WTC11 (cell line): ENCODE measurements at regions of chr10 and their contacts with region 1.

Region 1: GRCh38 chr10:35195361-35196306 is 69.0 kb downstream of the CREM start:
- DNase-seq: no peak
- ATAC-seq: peak; percentile 93
- H3K4me3 Mint-ChIP-seq: peak overlapping the region; percentile 72
- H3K27ac Mint-ChIP-seq: peak overlapping the region; percentile 89
- H3K4me1 Mint-ChIP-seq: peaks cover 27% of the 10 kb centered on the region
- H3K27me3 Mint-ChIP-seq: no peaks in the 10 kb centered on the region
- CTCF ChIP-seq: peak; percentile 72

Region 2: GRCh38 chr10:35119378-35119777 is 76.3 kb before region 1 on chr10:
- CTCF ChIA-PET with region 1: interaction called, 25 read pairs
- POLR2A ChIA-PET with region 1: interaction called, 3 read pairs
- DNase-seq: no peak
- ATAC-seq: no peak
- H3K4me3 Mint-ChIP-seq: no peak overlapping the region
- H3K27ac Mint-ChIP-seq: no peak overlapping the region
- H3K4me1 Mint-ChIP-seq: no peaks in the 10 kb centered on the region
- H3K27me3 Mint-ChIP-seq: no peaks in the 10 kb centered on the region
- CTCF ChIP-seq: no peak

Region 3: GRCh38 chr10:35165136-35165535 is 30.5 kb before region 1 on chr10:
- CTCF ChIA-PET with region 1: interaction called, 15 read pairs
- POLR2A ChIA-PET with region 1: no interaction called
- DNase-seq: no peak
- ATAC-seq: 0 out of 2 replicates have a peak, but pooled peaks have one; percentile 26
- H3K4me3 Mint-ChIP-seq: no peak overlapping the region
- H3K27ac Mint-ChIP-seq: no peak overlapping the region
- H3K4me1 Mint-ChIP-seq: 0 out of 2 replicates have a peak, but pooled peaks cover 3% of the 10 kb centered on the region
- H3K27me3 Mint-ChIP-seq: no peaks in the 10 kb centered on the region
- CTCF ChIP-seq: no peak

Region 4: DNA sequence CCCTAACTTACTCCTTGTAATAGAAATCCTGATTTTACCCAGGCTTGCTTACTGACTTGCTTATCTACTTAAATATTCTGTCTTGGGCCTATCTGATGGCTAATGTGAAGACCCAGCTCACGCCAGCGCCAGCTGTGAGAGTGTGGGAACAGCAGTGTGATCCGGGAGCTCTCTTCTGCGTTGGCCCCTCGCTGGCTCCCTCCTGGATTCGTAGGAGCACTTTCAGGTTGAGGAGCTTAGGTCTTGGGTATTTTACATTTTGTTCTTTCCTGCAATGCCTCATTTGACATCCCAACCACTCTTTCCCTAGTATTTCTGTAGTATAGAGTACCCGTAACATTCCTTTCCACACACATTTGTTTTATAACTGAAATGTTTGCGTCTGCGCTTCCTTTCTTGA is 17.3 kb before region 1 on chr10:
- CTCF ChIA-PET with region 1: interaction called, 14 read pairs
- POLR2A ChIA-PET with region 1: no interaction called
- DNase-seq: no peak
- ATAC-seq: peak; percentile 48; the same call in 1 of the 2 replicates
- H3K4me3 Mint-ChIP-seq: no peak overlapping the region
- H3K27ac Mint-ChIP-seq: 0 out of 2 replicates have a peak overlapping the region, but pooled peaks have one; percentile 2
- H3K4me1 Mint-ChIP-seq: no peaks in the 10 kb centered on the region
- H3K27me3 Mint-ChIP-seq: no peaks in the 10 kb centered on the region
- CTCF ChIP-seq: no peak

Region 5: DNA sequence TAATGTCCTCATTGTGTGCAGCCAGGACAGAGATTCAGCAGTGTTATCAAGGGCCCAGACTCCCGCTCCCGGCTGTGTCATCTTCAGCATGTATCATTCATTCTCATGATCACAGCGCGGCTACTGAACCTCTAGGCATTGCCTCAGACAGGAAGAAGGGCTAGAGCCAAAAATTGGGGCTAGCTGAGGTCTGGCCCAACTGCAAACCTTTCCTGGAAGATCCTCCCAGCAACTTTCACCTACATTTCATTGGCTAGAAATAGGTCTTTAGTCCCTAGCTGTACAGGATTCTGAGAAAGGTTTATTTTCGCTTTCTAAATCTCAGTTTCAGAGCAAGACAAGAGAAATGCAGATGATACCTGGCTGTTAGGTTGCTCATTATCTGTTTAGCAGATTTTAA is 12.9 kb after region 1 on chr10:
- CTCF ChIA-PET with region 1: interaction called, 64 read pairs
- POLR2A ChIA-PET with region 1: interaction called, 3 read pairs
- DNase-seq: no peak
- ATAC-seq: no peak
- H3K4me3 Mint-ChIP-seq: no peak overlapping the region
- H3K27ac Mint-ChIP-seq: peak overlapping the region; percentile 62; the same call in 1 of the 2 replicates
- H3K4me1 Mint-ChIP-seq: peaks cover 54% of the 10 kb centered on the region
- H3K27me3 Mint-ChIP-seq: no peaks in the 10 kb centered on the region
- CTCF ChIP-seq: no peak

Region 6: GRCh38 chr10:35225204-35225603 is 29.6 kb after region 1 on chr10:
- CTCF ChIA-PET with region 1: interaction called, 11 read pairs
- POLR2A ChIA-PET with region 1: no interaction called
- DNase-seq: no peak
- ATAC-seq: no peak
- H3K4me3 Mint-ChIP-seq: no peak overlapping the region
- H3K27ac Mint-ChIP-seq: no peak overlapping the region
- H3K4me1 Mint-ChIP-seq: peaks cover 4% of the 10 kb centered on the region
- H3K27me3 Mint-ChIP-seq: no peaks in the 10 kb centered on the region
- CTCF ChIP-seq: no peak

Region 7: DNA sequence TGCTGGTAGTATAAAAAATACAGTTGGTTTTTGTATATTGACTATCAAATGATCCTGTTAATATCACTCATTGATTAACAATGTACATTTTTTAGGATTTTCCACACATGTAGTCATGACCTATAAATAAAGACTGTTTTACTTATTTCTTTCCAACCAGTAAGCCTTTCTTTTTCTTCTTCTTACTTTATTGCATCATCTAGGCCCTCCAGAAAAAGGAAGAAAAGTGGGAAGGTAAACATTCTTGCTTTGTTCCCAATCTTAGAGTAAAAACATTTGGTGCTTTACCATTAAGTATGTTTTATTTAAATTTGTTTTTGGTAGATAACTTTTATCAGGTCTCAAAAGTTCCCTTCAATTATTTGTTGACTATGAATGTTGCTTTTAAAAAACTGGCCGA is 93.6 kb after region 1 on chr10:
- CTCF ChIA-PET with region 1: no interaction called
- POLR2A ChIA-PET with region 1: no interaction called
- DNase-seq: no peak
- ATAC-seq: no peak
- H3K4me3 Mint-ChIP-seq: no peak overlapping the region
- H3K27ac Mint-ChIP-seq: no peak overlapping the region
- H3K4me1 Mint-ChIP-seq: no peaks in the 10 kb centered on the region
- H3K27me3 Mint-ChIP-seq: no peaks in the 10 kb centered on the region; the same call in 1 of the 2 replicates
- CTCF ChIP-seq: no peak

Region 8: DNA sequence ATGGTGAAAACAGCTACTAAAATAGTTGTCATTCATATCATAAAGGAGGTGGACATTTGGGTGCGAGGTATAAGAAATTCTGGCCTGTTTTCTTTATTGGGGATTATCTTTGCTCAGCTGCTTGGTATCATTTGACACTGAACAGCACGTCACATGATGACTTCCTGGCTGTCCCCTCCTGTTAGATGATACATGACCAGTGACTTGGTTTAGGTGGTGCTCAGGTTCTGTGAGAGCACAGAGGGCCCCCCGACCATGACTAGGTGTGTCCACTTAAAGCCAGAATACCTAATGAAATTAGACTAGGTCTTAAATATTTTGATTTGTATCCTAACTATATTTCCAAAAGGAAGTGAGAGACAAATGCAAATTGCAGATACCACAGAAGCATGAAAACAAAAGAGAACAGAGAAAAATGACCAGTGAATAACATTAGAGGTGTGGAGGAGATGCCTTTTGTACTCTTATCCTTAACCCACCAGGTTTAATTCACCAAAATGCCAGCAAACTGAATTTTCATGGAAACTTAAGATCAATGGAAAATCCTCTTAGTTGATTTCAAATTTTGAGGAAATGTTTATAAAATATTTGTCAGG is 358.9 kb after region 1 on chr10:
- CTCF ChIA-PET with region 1: no interaction called
- POLR2A ChIA-PET with region 1: no interaction called
- DNase-seq: no peak
- ATAC-seq: no peak
- H3K4me3 Mint-ChIP-seq: no peak overlapping the region
- H3K27ac Mint-ChIP-seq: no peak overlapping the region
- H3K4me1 Mint-ChIP-seq: peaks cover 5% of the 10 kb centered on the region; the same call in 1 of the 2 replicates
- H3K27me3 Mint-ChIP-seq: no peaks in the 10 kb centered on the region
- CTCF ChIP-seq: no peak